CD8-positive, alpha-beta T cell (primary cell): ENCODE measurements at regions of chr19 and their contacts with region 1.

Region 1: DNA sequence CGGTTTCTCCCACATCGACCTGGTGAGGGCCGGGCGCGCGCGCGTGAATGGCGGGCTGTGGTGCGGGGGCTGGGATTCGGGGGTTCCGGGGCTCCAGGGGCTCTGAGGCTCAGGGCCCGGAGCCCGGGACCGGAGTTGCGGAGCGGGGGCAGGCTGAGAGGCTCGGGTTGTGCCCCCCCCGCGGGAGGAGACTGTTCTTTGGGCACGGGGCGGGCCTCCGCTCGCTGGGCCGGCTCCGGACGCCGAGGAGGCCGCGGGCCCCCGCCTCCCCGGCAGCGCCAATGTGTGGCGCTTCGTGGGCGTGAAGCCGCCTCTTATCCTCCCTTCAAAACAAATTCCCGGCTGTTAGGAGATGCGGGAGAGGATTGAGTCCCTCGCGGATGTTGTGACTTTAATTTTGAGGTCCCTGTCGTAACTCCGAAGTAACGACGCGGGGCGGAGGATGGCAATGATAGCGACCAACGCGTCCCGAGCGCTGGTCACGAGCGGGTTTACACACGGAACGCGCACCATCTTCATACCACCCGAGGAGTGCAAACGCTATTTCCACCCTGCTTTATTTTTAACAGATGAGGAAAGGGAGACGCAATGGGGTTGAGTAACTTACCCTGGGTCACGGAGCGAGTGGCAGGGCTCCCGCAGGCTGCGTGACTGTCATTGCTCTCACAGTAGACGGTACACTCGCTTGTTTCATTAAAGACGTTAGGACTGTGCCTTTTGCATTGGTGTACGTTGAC is 536 bp downstream of the UBA2 start:
- DNase-seq: peak in 5 of 9 experiments; percentile 24 to 61 (median 35)
- ATAC-seq: peak; percentile 43
- H3K4me3 ChIP-seq: peak overlapping the region; percentile 58 to 84
- H3K4me3 Mint-ChIP-seq: peak overlapping the region; percentile 99
- H3K27ac ChIP-seq: peak overlapping the region; percentile 76 to 82
- H3K27ac Mint-ChIP-seq: peak overlapping the region; percentile 96
- H3K4me1 ChIP-seq: peaks cover 29% of the 10 kb centered on the region
- H3K4me1 Mint-ChIP-seq: peaks cover 41% of the 10 kb centered on the region
- H3K27me3 ChIP-seq: no peaks in the 10 kb centered on the region
- H3K27me3 Mint-ChIP-seq: no peaks in the 10 kb centered on the region
- CTCF ChIP-seq: no peak

Region 2: GRCh38 chr19:34220472-34221063 is 208.1 kb before region 1 on chr19:
- CTCF ChIA-PET with region 1: interaction called, 4 read pairs
- POLR2A ChIA-PET with region 1: no interaction called
- intact Hi-C with region 1: loop called (anchors 2 to 5 kb)
- DNase-seq: peak; percentile 24 to 78 (median 65)
- ATAC-seq: no peak
- H3K4me3 ChIP-seq: no peak overlapping the region
- H3K4me3 Mint-ChIP-seq: no peak overlapping the region
- H3K27ac ChIP-seq: no peak overlapping the region
- H3K27ac Mint-ChIP-seq: peak overlapping the region; percentile 8
- H3K4me1 ChIP-seq: peaks cover 28% of the 10 kb centered on the region
- H3K4me1 Mint-ChIP-seq: peaks cover 58% of the 10 kb centered on the region
- H3K27me3 ChIP-seq: no peaks in the 10 kb centered on the region
- H3K27me3 Mint-ChIP-seq: no peaks in the 10 kb centered on the region
- CTCF ChIP-seq: peak; percentile 81

Region 3: DNA sequence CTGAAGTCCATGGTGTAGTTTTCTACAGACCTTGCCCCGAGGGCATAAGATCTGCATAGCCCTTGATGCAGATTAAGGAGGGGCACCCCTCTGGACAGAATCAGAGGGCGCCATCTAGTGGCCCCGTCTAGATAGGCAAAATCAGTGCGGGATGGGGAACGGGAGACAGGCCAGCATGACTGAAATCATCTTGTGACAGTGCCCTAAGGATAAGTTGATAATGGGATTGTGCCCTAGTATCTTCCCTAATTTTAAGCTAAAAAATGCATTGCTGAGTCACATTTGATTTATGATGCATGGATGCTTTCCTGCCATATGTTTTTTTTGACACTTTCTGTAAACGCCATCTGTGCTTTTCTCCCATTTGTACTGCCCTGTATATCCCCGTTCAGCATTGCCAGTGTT is 82.8 kb before region 1 on chr19:
- CTCF ChIA-PET with region 1: interaction called, 10 read pairs
- POLR2A ChIA-PET with region 1: interaction called, 3 read pairs
- intact Hi-C with region 1: no loop called
- DNase-seq: peak; percentile 37 to 79 (median 73)
- ATAC-seq: no peak
- H3K4me3 ChIP-seq: no peak overlapping the region
- H3K4me3 Mint-ChIP-seq: no peak overlapping the region
- H3K27ac ChIP-seq: no peak overlapping the region
- H3K27ac Mint-ChIP-seq: no peak overlapping the region
- H3K4me1 ChIP-seq: peaks cover 19% of the 10 kb centered on the region
- H3K4me1 Mint-ChIP-seq: peaks cover 19% of the 10 kb centered on the region
- H3K27me3 ChIP-seq: no peaks in the 10 kb centered on the region
- H3K27me3 Mint-ChIP-seq: no peaks in the 10 kb centered on the region
- CTCF ChIP-seq: peak; percentile 82

Region 4: GRCh38 chr19:34404109-34404897 is 24.4 kb before region 1 on chr19 and contains the start of gene PDCD2L:
- CTCF ChIA-PET with region 1: interaction called, 4 read pairs
- POLR2A ChIA-PET with region 1: interaction called, 10 read pairs
- intact Hi-C with region 1: loop called (anchors 1 kb)
- DNase-seq: peak; percentile 81 to 96 (median 94)
- ATAC-seq: peak; percentile 97
- H3K4me3 ChIP-seq: peak within 1 kb of the TSS; percentile 84 to 98
- H3K4me3 Mint-ChIP-seq: peak within 1 kb of the TSS; percentile 93
- H3K27ac ChIP-seq: peak within 1 kb of the TSS; percentile 49 to 74
- H3K27ac Mint-ChIP-seq: peak within 1 kb of the TSS; percentile 88
- H3K4me1 ChIP-seq: peaks cover 3% of the 10 kb centered on the region
- H3K4me1 Mint-ChIP-seq: peaks cover 20% of the 10 kb centered on the region
- H3K27me3 ChIP-seq: no peaks in the 10 kb centered on the region
- H3K27me3 Mint-ChIP-seq: no peaks in the 10 kb centered on the region
- CTCF ChIP-seq: no peak
- total RNA-seq, gene PDCD2L: 6.1 to 6.5 TPM

Region 5: GRCh38 chr19:34633802-34634201 is 205.1 kb after region 1 on chr19:
- CTCF ChIA-PET with region 1: no interaction called
- POLR2A ChIA-PET with region 1: no interaction called
- intact Hi-C with region 1: no loop called
- DNase-seq: no peak
- ATAC-seq: no peak
- H3K4me3 ChIP-seq: no peak overlapping the region
- H3K4me3 Mint-ChIP-seq: no peak overlapping the region
- H3K27ac ChIP-seq: no peak overlapping the region
- H3K27ac Mint-ChIP-seq: no peak overlapping the region
- H3K4me1 ChIP-seq: no peaks in the 10 kb centered on the region
- H3K4me1 Mint-ChIP-seq: no peaks in the 10 kb centered on the region
- H3K27me3 ChIP-seq: no peaks in the 10 kb centered on the region
- H3K27me3 Mint-ChIP-seq: no peaks in the 10 kb centered on the region
- CTCF ChIP-seq: no peak

Region 6: GRCh38 chr19:34733826-34734600 is 305.3 kb after region 1 on chr19 and contains the start of gene ZNF181:
- CTCF ChIA-PET with region 1: no interaction called
- POLR2A ChIA-PET with region 1: no interaction called
- intact Hi-C with region 1: loop called in 1 of 2 experiments (anchors 5 kb)
- DNase-seq: peak; percentile 56 to 90 (median 82)
- ATAC-seq: peak; percentile 87
- H3K4me3 ChIP-seq: peak within 1 kb of the TSS; percentile 88 to 93
- H3K4me3 Mint-ChIP-seq: peak within 1 kb of the TSS; percentile 95
- H3K27ac ChIP-seq: peak within 1 kb of the TSS; percentile 92 to 96
- H3K27ac Mint-ChIP-seq: peak within 1 kb of the TSS; percentile 98
- H3K4me1 ChIP-seq: peaks cover 26% of the 10 kb centered on the region
- H3K4me1 Mint-ChIP-seq: peaks cover 34% of the 10 kb centered on the region
- H3K27me3 ChIP-seq: no peaks in the 10 kb centered on the region
- H3K27me3 Mint-ChIP-seq: no peaks in the 10 kb centered on the region
- CTCF ChIP-seq: no peak
- total RNA-seq, gene ZNF181: 1.5 to 1.7 TPM